ENCODE measurements at regions of chr4 and their contacts with region 1.

Region 1: DNA sequence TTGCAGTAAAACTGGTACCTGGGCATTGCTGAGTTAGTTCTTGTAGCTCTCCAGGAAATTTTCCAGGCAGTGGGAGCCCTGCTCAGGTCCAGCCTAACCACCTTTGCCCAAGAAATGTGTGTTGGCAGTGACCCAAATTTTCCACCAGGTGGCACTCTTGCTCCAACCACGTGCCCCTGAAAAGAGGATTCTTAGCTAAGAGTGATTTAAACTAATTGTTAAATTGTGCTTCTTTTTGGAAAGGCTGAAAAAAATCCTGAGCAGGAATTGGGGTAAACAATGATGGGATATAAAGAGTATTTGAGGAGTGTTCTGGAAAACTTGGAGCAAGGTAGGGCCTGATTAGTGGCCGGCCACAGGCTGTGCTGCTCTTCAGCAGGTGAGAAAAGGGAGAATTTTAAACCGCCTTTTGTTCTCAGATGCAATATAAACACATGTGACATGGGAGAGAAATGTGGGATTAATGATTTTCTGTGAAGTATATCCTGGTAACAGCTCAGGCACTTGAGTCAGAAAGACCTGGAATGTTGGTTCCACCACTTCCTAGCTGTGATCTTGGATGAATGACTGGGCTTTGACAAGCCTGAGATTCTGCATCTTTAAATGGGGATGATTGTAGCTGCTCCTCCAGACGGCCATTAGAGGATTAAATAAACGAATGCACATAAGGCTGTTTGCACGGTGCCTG is 219.6 kb downstream of the PTTG2 start:
- DNase-seq: peak; percentile 56
- ATAC-seq: peak; percentile 85
- H3K4me3 ChIP-seq: no peak overlapping the region
- H3K27ac ChIP-seq: no peak overlapping the region
- H3K4me1 ChIP-seq: peaks cover 39% of the 10 kb centered on the region
- H3K27me3 ChIP-seq: no peaks in the 10 kb centered on the region
- CTCF ChIP-seq: peak; percentile 76 to 94 (median 88)
- EP300 ChIP-seq: no peak
- POLR2A ChIP-seq: no peak
- RAD21 ChIP-seq: peak; percentile 98

Region 2: GRCh38 chr4:38069271-38069760 is 110.5 kb before region 1 on chr4:
- CTCF ChIA-PET with region 1: interaction called, 202 read pairs
- POLR2A ChIA-PET with region 1: interaction called, 4 read pairs
- RAD21 ChIA-PET with region 1: interaction called, 173 read pairs
- SMC1A ChIA-PET with region 1: interaction called, 53 read pairs
- in situ Hi-C with region 1: no loop called
- intact Hi-C with region 1: no loop called
- DNase-seq: no peak
- ATAC-seq: peak; percentile 63
- H3K4me3 ChIP-seq: no peak overlapping the region
- H3K27ac ChIP-seq: peak overlapping the region; percentile 22
- H3K4me1 ChIP-seq: peaks cover 19% of the 10 kb centered on the region
- H3K27me3 ChIP-seq: no peaks in the 10 kb centered on the region
- CTCF ChIP-seq: peak; percentile 48 to 79 (median 67); a peak in 5 of 6 replicates
- EP300 ChIP-seq: no peak
- POLR2A ChIP-seq: no peak
- RAD21 ChIP-seq: peak; percentile 92

Region 3: GRCh38 chr4:38169524-38169923 is 10.3 kb before region 1 on chr4:
- CTCF ChIA-PET with region 1: interaction called, 17 read pairs
- POLR2A ChIA-PET with region 1: interaction called, 4 read pairs
- RAD21 ChIA-PET with region 1: interaction called, 6 read pairs
- SMC1A ChIA-PET with region 1: interaction called, 16 read pairs
- in situ Hi-C with region 1: no loop called
- intact Hi-C with region 1: no loop called
- DNase-seq: no peak
- ATAC-seq: no peak
- H3K4me3 ChIP-seq: no peak overlapping the region
- H3K27ac ChIP-seq: no peak overlapping the region
- H3K4me1 ChIP-seq: peaks cover under 1% of the 10 kb centered on the region; the same call in 1 of the 2 replicates
- H3K27me3 ChIP-seq: no peaks in the 10 kb centered on the region
- CTCF ChIP-seq: no peak
- EP300 ChIP-seq: no peak
- POLR2A ChIP-seq: no peak
- RAD21 ChIP-seq: no peak

Region 4: GRCh38 chr4:38319456-38320342 is 139.9 kb after region 1 on chr4:
- CTCF ChIA-PET with region 1: interaction called, 50 read pairs
- POLR2A ChIA-PET with region 1: interaction called, 3 read pairs
- RAD21 ChIA-PET with region 1: interaction called, 73 read pairs
- SMC1A ChIA-PET with region 1: interaction called, 94 read pairs
- in situ Hi-C with region 1: loop called (anchors 5 kb)
- intact Hi-C with region 1: loop called (anchors 1 kb)
- DNase-seq: peak; percentile 74
- ATAC-seq: peak; percentile 80
- H3K4me3 ChIP-seq: peak overlapping the region; percentile 47
- H3K27ac ChIP-seq: peak overlapping the region; percentile 91
- H3K4me1 ChIP-seq: peaks cover 27% of the 10 kb centered on the region
- H3K27me3 ChIP-seq: no peaks in the 10 kb centered on the region
- CTCF ChIP-seq: peak; percentile 93 to 99 (median 99)
- EP300 ChIP-seq: no peak
- POLR2A ChIP-seq: no peak
- RAD21 ChIP-seq: peak; percentile 99

Region 5: GRCh38 chr4:38743866-38744265 is 564.0 kb after region 1 on chr4:
- CTCF ChIA-PET with region 1: interaction called, 7 read pairs
- POLR2A ChIA-PET with region 1: no interaction called
- RAD21 ChIA-PET with region 1: interaction called, 3 read pairs
- SMC1A ChIA-PET with region 1: interaction called, 23 read pairs
- in situ Hi-C with region 1: no loop called
- intact Hi-C with region 1: no loop called
- DNase-seq: no peak
- ATAC-seq: peak; percentile 55
- H3K4me3 ChIP-seq: peak overlapping the region; percentile 15; the same call in 1 of the 2 replicates
- H3K27ac ChIP-seq: no peak overlapping the region
- H3K4me1 ChIP-seq: peaks cover 6% of the 10 kb centered on the region; the same call in 1 of the 2 replicates
- H3K27me3 ChIP-seq: no peaks in the 10 kb centered on the region
- CTCF ChIP-seq: no peak
- EP300 ChIP-seq: no peak
- POLR2A ChIP-seq: no peak
- RAD21 ChIP-seq: no peak

Region 6: DNA sequence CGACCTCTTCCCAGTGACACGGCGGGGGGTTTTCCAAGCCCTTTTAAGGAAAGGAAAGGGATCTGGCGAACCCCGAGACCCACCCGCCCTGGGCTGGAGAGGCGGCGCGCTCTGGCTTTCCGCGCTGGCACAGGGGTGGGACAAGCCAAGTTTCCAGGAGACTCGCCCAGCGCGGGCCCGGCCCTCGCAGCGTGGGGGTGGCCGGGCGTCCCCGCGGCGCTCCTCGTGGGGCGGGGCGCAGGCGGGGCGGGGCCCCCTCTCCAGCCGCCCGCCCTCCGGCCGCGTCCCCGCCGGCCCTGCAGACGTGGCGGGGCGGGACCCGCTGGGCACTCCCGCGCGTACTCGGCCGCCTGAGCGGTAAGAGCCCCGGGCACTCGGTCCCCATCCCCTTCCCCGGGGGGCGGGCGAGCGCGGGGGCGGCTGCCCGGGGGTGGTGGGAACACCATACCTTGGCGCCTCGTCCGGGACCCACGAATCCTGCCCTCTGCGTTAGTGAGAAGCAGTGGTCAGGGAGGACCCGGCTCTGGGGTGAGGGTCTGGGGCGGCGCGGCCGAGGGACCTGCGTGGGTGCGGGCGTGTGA is 687.7 kb after region 1 on chr4 and contains the start of gene FAM114A1:
- CTCF ChIA-PET with region 1: no interaction called
- POLR2A ChIA-PET with region 1: no interaction called
- RAD21 ChIA-PET with region 1: no interaction called
- SMC1A ChIA-PET with region 1: interaction called, 4 read pairs
- in situ Hi-C with region 1: loop called (anchors 10 kb)
- intact Hi-C with region 1: no loop called
- DNase-seq: no peak
- ATAC-seq: peak; percentile 99
- H3K4me3 ChIP-seq: peak within 1 kb of the TSS; percentile 82
- H3K27ac ChIP-seq: no peak within 1 kb of the TSS; the same call in 1 of the 2 replicates
- H3K4me1 ChIP-seq: peaks cover 7% of the 10 kb centered on the region
- H3K27me3 ChIP-seq: no peaks in the 10 kb centered on the region
- CTCF ChIP-seq: no peak
- EP300 ChIP-seq: no peak
- POLR2A ChIP-seq: peak; percentile 80
- RAD21 ChIP-seq: no peak
- polyA plus RNA-seq, gene FAM114A1: 1.3 to 1.9 TPM

Measured in GM12878 (cell line).